Activated naive CD4-positive, alpha-beta T cell treated with anti-CD3 and anti-CD28 coated beads, Interleukin-2, amount 10 ng/mL, durations not matched to agents 7 days and 5 days (primary cell): ENCODE measurements at regions of chr16 and their contacts with region 1.

Region 1: GRCh38 chr16:57475711-57476339 is 10.5 kb downstream of the DOK4 start:
- DNase-seq: peak; percentile 90
- H3K4me3 Mint-ChIP-seq: no peak overlapping the region
- H3K27ac Mint-ChIP-seq: peak overlapping the region; percentile 69
- H3K4me1 Mint-ChIP-seq: peaks cover 25% of the 10 kb centered on the region
- H3K27me3 Mint-ChIP-seq: peaks cover 8% of the 10 kb centered on the region

Region 2: DNA sequence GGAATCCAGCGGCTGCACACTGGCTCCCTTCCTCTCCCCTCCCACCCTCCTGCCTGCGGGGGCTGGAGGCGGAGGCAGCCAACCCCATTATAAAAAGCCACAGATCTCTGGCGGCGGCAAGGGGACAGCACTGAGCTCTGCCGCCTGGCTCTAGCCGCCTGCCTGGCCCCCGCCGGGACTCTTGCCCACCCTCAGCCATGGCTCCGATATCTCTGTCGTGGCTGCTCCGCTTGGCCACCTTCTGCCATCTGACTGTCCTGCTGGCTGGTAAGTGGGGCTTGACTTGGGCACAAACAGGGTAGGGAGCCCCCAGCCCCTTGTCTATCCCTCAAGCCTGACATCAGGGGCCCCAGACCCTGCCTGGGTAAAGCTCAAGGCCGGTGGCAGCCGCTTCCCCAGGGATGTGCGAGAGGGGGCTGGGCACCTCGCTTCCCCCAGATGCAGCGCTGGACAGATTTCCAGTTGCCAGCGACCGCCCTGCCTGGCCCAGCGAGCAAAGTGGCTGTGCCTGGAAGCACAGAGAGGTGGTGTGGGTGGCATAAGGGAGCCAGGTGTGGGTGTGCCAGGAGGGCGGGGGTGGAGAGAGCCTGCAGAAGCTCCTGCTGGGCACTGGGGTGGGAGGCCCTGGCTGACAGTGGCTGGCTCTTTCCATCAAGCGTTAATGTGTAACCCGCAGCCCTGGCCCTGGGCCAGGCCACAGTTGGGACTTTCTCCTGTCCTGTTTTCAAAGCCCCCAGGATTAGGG is 103.3 kb before region 1 on chr16 and contains the start of gene CX3CL1:
- CTCF ChIA-PET with region 1: no interaction called
- DNase-seq: no peak
- H3K4me3 Mint-ChIP-seq: no peak within 1 kb of the TSS
- H3K27ac Mint-ChIP-seq: no peak within 1 kb of the TSS
- H3K4me1 Mint-ChIP-seq: no peaks in the 10 kb centered on the region
- H3K27me3 Mint-ChIP-seq: peaks cover 12% of the 10 kb centered on the region

Region 3: DNA sequence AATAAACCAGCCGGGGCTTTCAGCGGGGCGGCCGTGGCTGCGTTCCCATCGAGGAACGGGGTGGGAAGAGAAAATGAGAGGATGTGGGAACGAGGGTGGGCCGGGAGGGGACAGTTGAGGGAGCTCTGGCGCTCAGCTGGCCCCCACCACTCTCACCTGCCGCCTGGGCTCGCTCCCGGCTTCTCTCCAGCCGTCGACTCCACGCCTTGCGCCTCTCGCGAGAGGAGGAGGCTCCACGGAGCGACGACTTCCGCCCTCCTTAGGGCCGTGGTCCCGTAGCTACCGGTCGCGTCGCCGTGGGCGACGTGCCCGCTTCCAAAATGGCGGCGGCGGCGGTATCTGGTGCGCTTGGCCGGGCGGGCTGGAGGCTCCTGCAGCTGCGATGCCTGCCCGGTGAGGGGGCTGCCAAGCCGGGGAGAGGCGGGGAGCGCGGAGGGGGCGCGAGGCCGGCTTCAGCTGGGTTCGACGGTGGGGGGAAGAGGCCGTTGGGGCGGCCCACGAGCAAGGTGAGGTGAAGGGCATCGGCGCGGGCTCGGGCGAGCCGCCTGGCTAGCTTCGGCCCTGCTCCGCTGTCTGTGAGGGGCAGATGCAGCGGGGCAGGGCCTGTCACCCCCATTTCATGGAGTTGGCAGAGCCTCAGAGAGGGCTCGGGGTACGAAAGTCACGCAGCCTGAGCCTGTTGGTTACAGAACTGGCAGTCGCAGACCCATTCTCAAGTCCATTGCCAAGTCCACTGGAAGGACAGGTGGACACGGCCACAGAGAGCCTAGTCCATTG is 28.5 kb before region 1 on chr16 and contains the starts of genes CIAPIN1 and COQ9:
- CTCF ChIA-PET with region 1: no interaction called
- DNase-seq: peak; percentile 97
- H3K4me3 Mint-ChIP-seq: peak within 1 kb of the TSS; percentile 94
- H3K27ac Mint-ChIP-seq: peak within 1 kb of the TSS; percentile 89
- H3K4me1 Mint-ChIP-seq: peaks cover 38% of the 10 kb centered on the region
- H3K27me3 Mint-ChIP-seq: no peaks in the 10 kb centered on the region

Region 4: GRCh38 chr16:57462209-57462977 is 13.4 kb before region 1 on chr16 and contains the start of gene POLR2C:
- CTCF ChIA-PET with region 1: interaction called, 11 read pairs
- DNase-seq: peak; percentile 94
- H3K4me3 Mint-ChIP-seq: peak within 1 kb of the TSS; percentile 100
- H3K27ac Mint-ChIP-seq: peak within 1 kb of the TSS; percentile 97
- H3K4me1 Mint-ChIP-seq: peaks cover 28% of the 10 kb centered on the region
- H3K27me3 Mint-ChIP-seq: peaks cover 3% of the 10 kb centered on the region

Region 5: GRCh38 chr16:57485916-57486857 is 10.4 kb after region 1 on chr16 and contains the start of gene DOK4:
- CTCF ChIA-PET with region 1: interaction called, 23 read pairs
- DNase-seq: peak; percentile 85
- H3K4me3 Mint-ChIP-seq: peak within 1 kb of the TSS; percentile 75
- H3K27ac Mint-ChIP-seq: peak within 1 kb of the TSS; percentile 62
- H3K4me1 Mint-ChIP-seq: peaks cover 13% of the 10 kb centered on the region
- H3K27me3 Mint-ChIP-seq: peaks cover 45% of the 10 kb centered on the region

Region 6: GRCh38 chr16:57648590-57649442 is 173.0 kb after region 1 on chr16:
- CTCF ChIA-PET with region 1: no interaction called
- DNase-seq: peak; percentile 90
- H3K4me3 Mint-ChIP-seq: no peak overlapping the region
- H3K27ac Mint-ChIP-seq: peak overlapping the region; percentile 51
- H3K4me1 Mint-ChIP-seq: peaks cover 36% of the 10 kb centered on the region
- H3K27me3 Mint-ChIP-seq: peaks cover 3% of the 10 kb centered on the region